ENCODE measurements at regions of chr19 and their contacts with region 1.

Region 1: GRCh38 chr19:35775298-35776110 is at the start of gene ARHGAP33:
- DNase-seq: peak; percentile 99
- H3K4me3 ChIP-seq: peak within 1 kb of the TSS; percentile 82
- H3K4me3 Mint-ChIP-seq: peak within 1 kb of the TSS; percentile 79
- H3K27ac Mint-ChIP-seq: no peak within 1 kb of the TSS
- H3K4me1 ChIP-seq: no peaks in the 10 kb centered on the region
- H3K4me1 Mint-ChIP-seq: peaks cover 11% of the 10 kb centered on the region
- H3K27me3 ChIP-seq: no peaks in the 10 kb centered on the region
- H3K27me3 Mint-ChIP-seq: peaks cover 5% of the 10 kb centered on the region
- CTCF ChIP-seq: no peak
- total RNA-seq, gene ARHGAP33: 17.8 and 18.3 TPM in 2 replicates

Region 2: GRCh38 chr19:35746531-35746930 is 29.0 kb before region 1 on chr19:
- CTCF ChIA-PET with region 1: no interaction called
- POLR2A ChIA-PET with region 1: no interaction called
- intact Hi-C with region 1: no loop called
- DNase-seq: no peak
- H3K4me3 ChIP-seq: no peak overlapping the region; the same call in 1 of the 2 replicates
- H3K4me3 Mint-ChIP-seq: peak overlapping the region; percentile 93
- H3K27ac Mint-ChIP-seq: peak overlapping the region; percentile 98
- H3K4me1 ChIP-seq: peaks cover 7% of the 10 kb centered on the region
- H3K4me1 Mint-ChIP-seq: peaks cover 23% of the 10 kb centered on the region
- H3K27me3 ChIP-seq: no peaks in the 10 kb centered on the region
- H3K27me3 Mint-ChIP-seq: no peaks in the 10 kb centered on the region
- CTCF ChIP-seq: no peak

Region 3: DNA sequence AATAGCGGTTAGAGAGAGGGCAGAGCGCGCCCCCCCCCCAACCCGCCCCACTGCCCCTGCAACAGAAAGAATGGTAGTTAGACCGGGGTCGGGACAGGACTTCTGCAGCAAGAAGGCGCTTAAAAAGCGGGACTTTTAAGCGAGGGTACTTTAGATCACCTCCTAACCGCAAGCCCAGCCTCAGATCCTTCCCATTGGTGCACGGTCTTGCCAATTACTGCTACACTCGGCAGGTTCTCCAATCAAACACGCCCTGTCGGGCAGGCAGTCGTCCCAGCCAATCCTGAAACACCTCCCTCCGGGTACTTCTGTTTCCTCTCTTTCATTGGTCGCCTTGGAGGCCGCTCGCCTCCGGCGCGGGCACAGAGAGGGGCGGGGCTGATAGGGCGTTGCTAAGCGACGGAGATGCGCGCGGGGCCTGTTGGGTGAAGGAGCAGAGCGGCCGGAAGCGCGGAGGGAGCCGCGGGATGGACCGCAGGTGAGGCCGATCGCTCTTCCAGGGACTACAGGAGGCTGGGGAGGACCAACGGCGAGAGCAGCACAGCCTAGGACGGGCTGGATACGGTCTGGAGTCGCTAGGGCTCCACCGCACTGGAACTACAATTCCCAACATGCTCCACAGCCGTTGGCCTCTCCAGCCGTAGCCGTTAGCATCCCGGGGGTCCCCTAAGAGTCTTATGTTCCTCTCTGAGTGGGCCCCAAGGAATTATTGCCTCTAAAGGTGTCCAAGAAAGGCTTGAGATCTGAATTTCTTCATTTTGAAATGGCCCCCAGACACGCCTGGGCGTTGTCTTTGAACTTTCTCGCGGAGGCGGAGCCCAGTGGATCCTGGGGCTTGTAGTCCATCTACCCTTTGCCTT is 17.5 kb before region 1 on chr19 and contains the start of gene PROSER3:
- CTCF ChIA-PET with region 1: no interaction called
- POLR2A ChIA-PET with region 1: interaction called, 3 read pairs
- intact Hi-C with region 1: loop called (anchors 2 kb)
- DNase-seq: peak; percentile 99 to 100
- H3K4me3 ChIP-seq: peak within 1 kb of the TSS; percentile 68
- H3K4me3 Mint-ChIP-seq: peak within 1 kb of the TSS; percentile 88
- H3K27ac Mint-ChIP-seq: peak within 1 kb of the TSS; percentile 92
- H3K4me1 ChIP-seq: peaks cover 6% of the 10 kb centered on the region
- H3K4me1 Mint-ChIP-seq: peaks cover 6% of the 10 kb centered on the region
- H3K27me3 ChIP-seq: no peaks in the 10 kb centered on the region
- H3K27me3 Mint-ChIP-seq: no peaks in the 10 kb centered on the region
- CTCF ChIP-seq: no peak
- total RNA-seq, gene PROSER3: 34.6 and 37.0 TPM in 2 replicates

Measured in Caco-2 (cell line).